ENCODE measurements at regions of chr1 and their contacts with region 1.

Region 1: DNA sequence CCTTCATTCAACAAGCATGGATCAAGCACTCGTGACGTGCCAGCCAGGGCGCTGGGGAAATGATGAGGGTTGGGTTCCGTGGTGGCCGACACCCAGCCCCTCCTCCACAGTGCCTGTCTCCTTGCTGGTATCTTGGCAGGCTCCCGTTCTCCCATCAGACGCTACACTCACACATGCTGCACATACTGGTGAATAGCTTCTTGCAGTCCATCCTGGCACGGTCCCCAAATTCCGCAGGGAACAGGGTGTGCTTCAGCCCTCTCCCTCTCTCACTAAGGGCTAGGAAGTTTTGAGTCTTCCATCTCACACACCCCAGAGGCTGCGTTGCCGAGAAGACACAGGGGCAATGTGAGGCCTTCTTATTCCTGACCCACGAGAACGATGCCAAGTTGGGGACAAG is 10.1 kb upstream of the MEF2D start:
- DNase-seq: no peak
- ATAC-seq: no peak
- H3K4me3 ChIP-seq: no peak overlapping the region
- H3K27ac ChIP-seq: no peak overlapping the region
- H3K4me1 ChIP-seq: peaks cover 19% of the 10 kb centered on the region
- H3K27me3 ChIP-seq: no peaks in the 10 kb centered on the region
- CTCF ChIP-seq: no peak
- EP300 ChIP-seq: no peak
- POLR2A ChIP-seq: no peak
- RAD21 ChIP-seq: no peak

Region 2: DNA sequence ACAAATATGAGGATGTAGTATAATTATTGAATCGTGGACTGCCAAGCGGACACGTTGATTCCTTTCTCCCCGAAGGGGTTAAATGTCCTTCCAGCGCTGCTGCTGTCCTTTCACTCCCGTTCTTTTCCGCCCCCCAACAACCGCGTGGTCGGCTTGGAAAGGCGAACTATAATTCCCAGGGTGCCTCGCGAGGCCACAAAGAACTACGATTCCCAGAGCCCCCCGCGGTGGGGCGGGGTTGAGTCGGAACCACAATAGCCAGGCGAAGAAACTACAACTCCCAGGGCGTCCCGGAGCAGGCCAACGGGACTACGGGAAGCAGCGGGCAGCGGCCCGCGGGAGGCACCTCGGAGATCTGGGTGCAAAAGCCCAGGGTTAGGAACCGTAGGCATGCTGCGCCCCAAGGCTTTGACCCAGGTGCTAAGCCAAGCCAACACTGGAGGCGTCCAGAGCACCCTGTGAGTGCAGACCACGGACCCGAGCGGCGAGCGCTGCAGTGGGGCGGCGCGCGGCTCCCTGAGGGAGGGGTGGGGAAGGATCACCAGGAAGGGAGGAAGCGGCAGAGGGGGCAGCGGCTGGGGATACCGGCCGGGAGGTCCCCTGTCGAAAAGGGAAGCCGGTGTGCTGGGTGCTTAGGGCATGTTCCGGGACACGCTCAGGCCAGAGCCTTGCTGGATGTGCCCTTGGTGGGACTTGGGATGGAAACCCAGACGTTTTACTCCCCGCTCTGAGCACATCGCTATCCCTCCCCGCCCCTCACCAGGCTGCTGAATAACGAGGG is 456.0 kb before region 1 on chr1 and contains the start of gene LAMTOR2:
- CTCF ChIA-PET with region 1: no interaction called
- POLR2A ChIA-PET with region 1: no interaction called
- RAD21 ChIA-PET with region 1: no interaction called
- SMC1A ChIA-PET with region 1: no interaction called
- in situ Hi-C with region 1: no loop called
- intact Hi-C with region 1: no loop called
- DNase-seq: peak; percentile 83
- ATAC-seq: peak; percentile 84
- H3K4me3 ChIP-seq: peak within 1 kb of the TSS; percentile 93
- H3K27ac ChIP-seq: peak within 1 kb of the TSS; percentile 95
- H3K4me1 ChIP-seq: no peaks in the 10 kb centered on the region; the same call in 1 of the 2 replicates
- H3K27me3 ChIP-seq: no peaks in the 10 kb centered on the region
- CTCF ChIP-seq: no peak
- EP300 ChIP-seq: no peak
- POLR2A ChIP-seq: peak; percentile 73; the same call in 1 of the 2 replicates
- RAD21 ChIP-seq: no peak
- polyA plus RNA-seq, gene LAMTOR2: 225 to 264 TPM

Region 3: GRCh38 chr1:156489166-156489934 is 21.4 kb before region 1 on chr1:
- CTCF ChIA-PET with region 1: interaction called, 175 read pairs
- POLR2A ChIA-PET with region 1: interaction called, 630 read pairs
- RAD21 ChIA-PET with region 1: interaction called, 323 read pairs
- SMC1A ChIA-PET with region 1: interaction called, 460 read pairs
- in situ Hi-C with region 1: no loop called
- intact Hi-C with region 1: loop called (anchors 1 kb)
- DNase-seq: no peak
- ATAC-seq: peak; percentile 16
- H3K4me3 ChIP-seq: peak overlapping the region; percentile 73
- H3K27ac ChIP-seq: peak overlapping the region; percentile 96
- H3K4me1 ChIP-seq: peaks cover 86% of the 10 kb centered on the region
- H3K27me3 ChIP-seq: no peaks in the 10 kb centered on the region
- CTCF ChIP-seq: peak in 1 of 3 experiments; percentile 33; a peak in 1 of 6 replicates
- EP300 ChIP-seq: peak in 1 of 2 experiments; percentile 42; a peak in 2 of 4 replicates
- POLR2A ChIP-seq: peak; percentile 48
- RAD21 ChIP-seq: no peak; the same call in 1 of the 2 replicates

Region 4: GRCh38 chr1:156601122-156601830 is 90.6 kb after region 1 on chr1 and contains the start of gene GPATCH4:
- CTCF ChIA-PET with region 1: interaction called, 13 read pairs
- POLR2A ChIA-PET with region 1: interaction called, 3 read pairs
- RAD21 ChIA-PET with region 1: interaction called, 4 read pairs
- SMC1A ChIA-PET with region 1: no interaction called
- in situ Hi-C with region 1: no loop called
- intact Hi-C with region 1: loop called (anchors 5 kb)
- DNase-seq: no peak
- ATAC-seq: peak; percentile 80
- H3K4me3 ChIP-seq: peak within 1 kb of the TSS; percentile 82
- H3K27ac ChIP-seq: peak within 1 kb of the TSS; percentile 93
- H3K4me1 ChIP-seq: peaks cover 9% of the 10 kb centered on the region
- H3K27me3 ChIP-seq: no peaks in the 10 kb centered on the region
- CTCF ChIP-seq: no peak
- EP300 ChIP-seq: 0 out of 4 replicates have a peak, but pooled peaks of 1 of the 2 experiments have one; percentile 13
- POLR2A ChIP-seq: peak; percentile 92
- RAD21 ChIP-seq: no peak
- polyA plus RNA-seq, gene GPATCH4: 82.5 to 90.4 TPM

Region 5: GRCh38 chr1:156797212-156797871 is 286.6 kb after region 1 on chr1:
- CTCF ChIA-PET with region 1: no interaction called
- POLR2A ChIA-PET with region 1: no interaction called
- RAD21 ChIA-PET with region 1: no interaction called
- SMC1A ChIA-PET with region 1: no interaction called
- in situ Hi-C with region 1: no loop called
- intact Hi-C with region 1: no loop called
- DNase-seq: no peak
- ATAC-seq: peak; percentile 94
- H3K4me3 ChIP-seq: no peak overlapping the region
- H3K27ac ChIP-seq: no peak overlapping the region
- H3K4me1 ChIP-seq: peaks cover 17% of the 10 kb centered on the region
- H3K27me3 ChIP-seq: no peaks in the 10 kb centered on the region
- CTCF ChIP-seq: peak; percentile 78 to 88 (median 82)
- EP300 ChIP-seq: no peak
- POLR2A ChIP-seq: no peak
- RAD21 ChIP-seq: peak; percentile 84